H1 (cell line): ENCODE measurements at regions of chr1 and their contacts with region 1.

Region 1: DNA sequence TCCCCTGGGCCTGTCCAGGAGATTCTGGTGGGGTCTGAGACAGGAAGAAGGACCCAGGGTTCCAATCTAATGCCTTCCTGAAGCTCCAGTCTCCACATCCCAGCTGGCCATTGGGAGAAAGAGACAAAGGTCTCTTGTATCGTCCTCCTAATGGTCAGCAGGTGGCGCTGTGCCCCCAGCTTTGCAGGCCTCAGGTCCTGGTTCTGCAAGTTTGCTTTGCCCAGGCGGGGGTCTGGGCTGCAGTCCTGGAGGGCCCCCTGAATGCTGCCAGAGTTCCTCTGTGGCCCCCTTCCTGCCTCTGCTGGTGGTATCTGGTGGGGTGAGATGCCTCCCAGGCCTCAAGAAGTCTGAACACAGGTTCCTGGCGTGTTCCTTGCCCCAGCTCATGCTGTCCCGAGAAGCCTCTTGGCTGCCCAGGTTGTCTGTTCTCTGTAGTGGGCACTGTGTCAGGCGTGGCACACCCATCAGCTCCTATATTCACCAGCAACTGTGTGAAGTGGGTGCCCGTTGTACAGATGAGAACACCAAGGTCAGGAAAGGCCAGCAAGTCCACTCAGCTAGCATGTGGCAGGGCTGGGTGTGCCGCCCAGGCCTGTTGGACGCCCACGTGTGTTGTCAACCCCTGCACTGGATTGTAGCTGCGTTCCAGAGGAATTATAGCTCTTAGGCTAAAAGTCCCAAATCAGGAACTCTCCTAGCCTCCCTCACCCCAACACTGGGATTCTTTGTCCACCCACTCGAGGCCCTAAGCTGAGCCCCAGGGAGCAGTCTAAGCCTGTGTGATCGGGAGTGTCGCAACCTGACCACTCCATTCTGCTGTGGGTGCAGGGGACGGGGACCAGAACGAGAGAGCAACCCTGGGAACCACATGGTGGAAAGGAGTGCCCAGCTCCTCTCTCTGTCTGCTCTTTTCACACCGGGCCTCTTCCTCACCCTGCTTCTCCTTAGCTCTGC is 33.9 kb upstream of the CSF3R start:
- DNase-seq: peak; percentile 31 to 82
- H3K4me3 ChIP-seq: no peak overlapping the region
- H3K27ac ChIP-seq: no peak overlapping the region
- H3K4me1 ChIP-seq: peaks cover 0 to 4% (median 0%) of the 10 kb centered on the region in 4 experiments; a peak in 2 of 7 replicates
- H3K27me3 ChIP-seq: no peaks in the 10 kb centered on the region
- CTCF ChIP-seq: peak; percentile 86 to 95 (median 95)
- EP300 ChIP-seq: no peak
- POLR2A ChIP-seq: no peak
- RAD21 ChIP-seq: peak; percentile 94 to 98

Region 2: GRCh38 chr1:36248250-36248894 is 268.3 kb before region 1 on chr1:
- CTCF ChIA-PET with region 1: no interaction called
- POLR2A ChIA-PET with region 1: no interaction called
- DNase-seq: no peak
- H3K4me3 ChIP-seq: no peak overlapping the region
- H3K27ac ChIP-seq: no peak overlapping the region
- H3K4me1 ChIP-seq: no peaks in the 10 kb centered on the region
- H3K27me3 ChIP-seq: no peaks in the 10 kb centered on the region
- CTCF ChIP-seq: no peak
- EP300 ChIP-seq: no peak
- POLR2A ChIP-seq: no peak
- RAD21 ChIP-seq: no peak

Region 3: DNA sequence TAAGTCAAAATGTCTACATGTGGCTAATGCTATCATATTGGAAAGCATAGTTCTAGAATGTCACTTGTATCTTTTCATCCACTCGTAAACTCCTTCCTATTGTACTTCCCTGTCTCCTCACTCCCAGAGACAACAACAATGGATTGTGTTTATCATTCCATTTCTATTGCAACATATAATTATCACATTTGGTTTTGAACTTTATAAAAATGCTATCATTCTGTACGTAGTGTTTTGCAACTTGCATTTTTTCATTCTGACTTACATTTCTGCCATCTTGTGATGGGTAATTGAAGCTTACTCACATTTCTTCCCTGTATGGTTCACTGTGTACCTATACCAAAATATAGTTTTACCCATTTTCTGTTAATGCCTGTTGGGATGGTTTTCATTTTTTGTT is 19.4 kb before region 1 on chr1:
- CTCF ChIA-PET with region 1: interaction called, 14 read pairs
- POLR2A ChIA-PET with region 1: no interaction called
- DNase-seq: no peak
- H3K4me3 ChIP-seq: no peak overlapping the region
- H3K27ac ChIP-seq: no peak overlapping the region
- H3K4me1 ChIP-seq: no peaks in the 10 kb centered on the region
- H3K27me3 ChIP-seq: no peaks in the 10 kb centered on the region
- CTCF ChIP-seq: no peak
- EP300 ChIP-seq: no peak
- POLR2A ChIP-seq: no peak
- RAD21 ChIP-seq: no peak

Region 4: GRCh38 chr1:36534711-36535412 is 18.2 kb after region 1 on chr1:
- CTCF ChIA-PET with region 1: interaction called, 33 read pairs
- POLR2A ChIA-PET with region 1: no interaction called
- DNase-seq: peak in 1 of 2 experiments; percentile 28
- H3K4me3 ChIP-seq: no peak overlapping the region
- H3K27ac ChIP-seq: no peak overlapping the region
- H3K4me1 ChIP-seq: no peaks in the 10 kb centered on the region
- H3K27me3 ChIP-seq: no peaks in the 10 kb centered on the region
- CTCF ChIP-seq: no peak
- EP300 ChIP-seq: no peak
- POLR2A ChIP-seq: no peak
- RAD21 ChIP-seq: no peak

Region 5: DNA sequence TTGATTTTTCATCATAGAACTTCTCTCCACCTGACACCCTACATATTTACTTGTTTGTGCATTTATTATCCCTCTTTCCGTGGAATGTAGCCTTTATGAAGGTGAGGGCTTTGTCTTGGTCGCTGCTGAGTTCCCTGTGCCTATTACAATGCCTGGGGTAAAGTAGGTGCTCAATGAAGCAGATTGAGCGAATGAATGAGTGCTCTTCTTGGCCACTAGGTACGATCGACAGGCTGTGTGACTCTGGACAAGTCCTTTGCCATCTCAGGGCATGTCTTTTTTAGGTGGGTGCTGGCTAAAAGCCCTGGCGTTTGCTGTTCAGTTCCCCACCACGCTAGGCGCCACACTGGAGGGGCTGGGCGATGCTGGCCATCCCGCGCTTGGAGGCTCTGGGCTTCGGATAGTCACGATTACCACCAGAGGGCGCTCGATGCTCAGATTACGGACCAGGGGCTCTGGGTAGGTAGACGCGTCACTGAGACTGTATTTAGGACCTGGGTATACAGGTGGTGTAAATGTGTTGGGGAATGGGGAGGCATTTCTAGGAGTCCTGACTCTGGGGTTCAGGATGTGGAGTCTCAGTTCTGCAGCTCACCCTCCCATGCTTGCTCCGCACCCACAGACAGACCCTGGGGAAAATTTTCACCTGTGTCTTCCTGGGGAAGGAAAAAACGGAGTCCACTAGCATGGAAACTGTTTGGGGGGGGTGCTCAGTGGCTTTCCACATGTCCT is 37.1 kb after region 1 on chr1:
- CTCF ChIA-PET with region 1: interaction called, 53 read pairs
- POLR2A ChIA-PET with region 1: no interaction called
- DNase-seq: peak; percentile 58 to 93
- H3K4me3 ChIP-seq: no peak overlapping the region
- H3K27ac ChIP-seq: no peak overlapping the region
- H3K4me1 ChIP-seq: no peaks in the 10 kb centered on the region
- H3K27me3 ChIP-seq: peaks cover 0 to 5% (median 2%) of the 10 kb centered on the region in 4 experiments; a peak in 4 of 7 replicates
- CTCF ChIP-seq: peak; percentile 85 to 97 (median 91)
- EP300 ChIP-seq: no peak
- POLR2A ChIP-seq: no peak
- RAD21 ChIP-seq: peak; percentile 97

Region 6: DNA sequence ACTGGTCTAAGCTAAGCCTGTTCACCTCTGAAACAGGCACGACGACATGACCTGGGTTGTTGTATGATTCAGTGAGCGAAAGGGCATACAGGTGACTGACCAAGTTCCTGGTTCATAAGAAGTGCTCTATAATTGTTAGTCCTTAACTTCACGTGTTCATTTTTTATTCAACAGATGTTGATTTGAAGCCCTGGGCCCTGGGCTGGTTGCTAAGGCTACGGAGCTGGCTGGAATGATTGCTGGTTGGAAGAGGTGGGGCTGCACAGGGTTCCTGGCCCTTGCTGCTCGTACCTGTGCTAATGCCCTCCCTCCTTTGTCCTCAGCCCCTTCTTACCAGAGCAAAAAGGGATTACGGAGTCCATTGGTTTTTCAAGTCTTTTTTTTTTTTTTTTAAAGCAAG is 77.4 kb after region 1 on chr1:
- CTCF ChIA-PET with region 1: interaction called, 18 read pairs
- POLR2A ChIA-PET with region 1: no interaction called
- DNase-seq: no peak
- H3K4me3 ChIP-seq: no peak overlapping the region
- H3K27ac ChIP-seq: no peak overlapping the region
- H3K4me1 ChIP-seq: peaks cover 0 to 10% (median 2%) of the 10 kb centered on the region in 4 experiments; a peak in 2 of 7 replicates
- H3K27me3 ChIP-seq: no peaks in the 10 kb centered on the region; a peak in 1 of 7 replicates
- CTCF ChIP-seq: no peak
- EP300 ChIP-seq: no peak
- POLR2A ChIP-seq: no peak
- RAD21 ChIP-seq: no peak

Region 7: DNA sequence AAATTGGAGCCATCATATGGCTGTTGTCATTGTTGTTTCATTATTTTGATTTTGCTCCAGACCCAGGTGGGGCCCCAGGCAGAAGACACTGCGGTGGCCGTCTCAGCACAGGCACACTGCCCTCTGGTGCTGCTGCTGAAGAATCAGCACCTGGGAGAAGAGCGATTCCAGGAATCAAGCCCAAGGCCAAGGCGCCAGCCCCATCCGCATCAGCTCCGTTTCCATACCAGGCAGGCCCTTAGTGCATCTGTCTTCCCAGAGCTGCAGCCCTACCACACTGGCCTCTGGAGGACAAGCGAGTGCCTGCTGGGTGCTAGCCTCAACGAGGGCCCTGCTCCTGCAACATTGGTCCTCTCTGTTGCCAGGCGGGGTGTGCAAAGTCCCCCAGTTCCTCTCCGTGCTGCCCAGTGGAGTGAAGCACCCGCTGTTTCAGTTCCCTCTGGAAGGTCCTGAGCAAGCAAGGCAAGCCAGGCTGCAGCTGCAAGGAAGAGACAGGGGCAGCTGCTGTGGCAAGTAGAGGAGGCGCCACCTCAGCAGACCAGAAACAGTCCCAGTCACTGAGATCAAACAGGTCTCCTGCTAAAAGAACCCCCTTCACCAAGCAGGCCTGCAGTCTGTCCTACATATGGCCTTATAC is 512.5 kb after region 1 on chr1:
- CTCF ChIA-PET with region 1: interaction called, 11 read pairs
- POLR2A ChIA-PET with region 1: no interaction called
- DNase-seq: peak in 1 of 2 experiments; percentile 54
- H3K4me3 ChIP-seq: no peak overlapping the region
- H3K27ac ChIP-seq: no peak overlapping the region
- H3K4me1 ChIP-seq: peaks cover 0 to 16% (median 13%) of the 10 kb centered on the region in 4 experiments; a peak in 6 of 7 replicates
- H3K27me3 ChIP-seq: peaks cover 32 to 49% (median 45%) of the 10 kb centered on the region in 4 experiments
- CTCF ChIP-seq: peak; percentile 69 to 74 (median 71)
- EP300 ChIP-seq: no peak
- POLR2A ChIP-seq: no peak
- RAD21 ChIP-seq: peak; percentile 80 to 83